Activated CD4-positive, alpha-beta T cell treated with anti-CD3 and anti-CD28 coated beads for 36 hours (primary cell): ENCODE measurements at regions of chr17 and their contacts with region 1.

Region 1: GRCh38 chr17:35119368-35120165 is at the start of gene RAD51D:
- DNase-seq: peak; percentile 90
- ATAC-seq: peak; percentile 88
- H3K4me3 Mint-ChIP-seq: peak within 1 kb of the TSS; percentile 85
- H3K27ac Mint-ChIP-seq: peak within 1 kb of the TSS; percentile 92
- H3K4me1 Mint-ChIP-seq: peaks cover 33% of the 10 kb centered on the region
- H3K27me3 Mint-ChIP-seq: no peaks in the 10 kb centered on the region
- total RNA-seq, gene RAD51D: 19.9 to 31.8 TPM

Region 2: DNA sequence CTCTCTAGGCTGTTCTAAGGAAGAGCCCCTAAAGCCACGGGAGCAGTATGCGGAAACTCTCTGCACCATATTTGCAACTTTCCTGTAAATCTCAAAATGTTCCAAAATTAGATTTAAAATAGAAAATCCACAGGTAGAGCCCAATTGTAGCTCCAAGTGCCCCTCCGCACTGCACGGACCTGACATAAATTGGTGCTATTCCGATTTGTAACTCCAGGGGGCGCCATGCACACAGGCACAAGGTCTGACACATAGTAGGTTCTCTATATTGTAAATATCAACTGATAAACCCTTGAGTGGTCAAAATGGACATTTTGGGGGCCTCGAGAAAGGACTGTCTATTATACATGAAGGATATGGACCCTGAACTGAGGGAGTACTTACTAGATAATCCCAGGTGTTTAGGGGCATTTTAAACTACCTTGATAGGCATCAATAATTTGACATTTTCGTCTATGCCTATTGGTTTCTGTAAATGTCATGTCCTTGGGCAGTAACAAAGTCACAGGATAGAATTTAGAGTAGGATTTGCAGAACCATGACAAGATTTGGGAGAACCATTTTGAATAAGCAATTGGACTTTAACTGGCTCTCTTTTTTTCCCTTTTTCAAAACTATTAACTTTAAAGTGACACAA is 576.7 kb before region 1 on chr17:
- CTCF ChIA-PET with region 1: interaction called, 7 read pairs
- POLR2A ChIA-PET with region 1: no interaction called
- intact Hi-C with region 1: loop called (anchors 1 kb)
- DNase-seq: peak; percentile 68
- ATAC-seq: peak; percentile 47
- H3K4me3 Mint-ChIP-seq: no peak overlapping the region
- H3K27ac Mint-ChIP-seq: no peak overlapping the region
- H3K4me1 Mint-ChIP-seq: no peaks in the 10 kb centered on the region
- H3K27me3 Mint-ChIP-seq: peaks cover 22% of the 10 kb centered on the region

Region 3: GRCh38 chr17:34913001-34913400 is 206.6 kb before region 1 on chr17:
- CTCF ChIA-PET with region 1: no interaction called
- POLR2A ChIA-PET with region 1: interaction called, 10 read pairs
- intact Hi-C with region 1: no loop called
- DNase-seq: no peak
- ATAC-seq: no peak
- H3K4me3 Mint-ChIP-seq: no peak overlapping the region
- H3K27ac Mint-ChIP-seq: no peak overlapping the region
- H3K4me1 Mint-ChIP-seq: no peaks in the 10 kb centered on the region
- H3K27me3 Mint-ChIP-seq: no peaks in the 10 kb centered on the region

Region 4: GRCh38 chr17:34990921-34991365 is 128.6 kb before region 1 on chr17:
- CTCF ChIA-PET with region 1: interaction called, 15 read pairs
- POLR2A ChIA-PET with region 1: interaction called, 5 read pairs
- intact Hi-C with region 1: no loop called
- DNase-seq: no peak
- ATAC-seq: no peak
- H3K4me3 Mint-ChIP-seq: no peak overlapping the region
- H3K27ac Mint-ChIP-seq: no peak overlapping the region
- H3K4me1 Mint-ChIP-seq: no peaks in the 10 kb centered on the region
- H3K27me3 Mint-ChIP-seq: no peaks in the 10 kb centered on the region

Region 5: GRCh38 chr17:35088881-35089585 is 30.5 kb before region 1 on chr17:
- CTCF ChIA-PET with region 1: interaction called, 28 read pairs
- POLR2A ChIA-PET with region 1: interaction called, 4 read pairs
- intact Hi-C with region 1: loop called (anchors 1 kb)
- DNase-seq: peak; percentile 95
- ATAC-seq: peak; percentile 77
- H3K4me3 Mint-ChIP-seq: peak overlapping the region; percentile 89
- H3K27ac Mint-ChIP-seq: peak overlapping the region; percentile 97
- H3K4me1 Mint-ChIP-seq: peaks cover 54% of the 10 kb centered on the region
- H3K27me3 Mint-ChIP-seq: no peaks in the 10 kb centered on the region